Activated T-helper 1 cell treated with anti-CD3 and anti-CD28 coated beads, Interleukin-12 subunit alpha, Interleukin-12 subunit beta, Interleukin-2, Interleukin-4 antibody, amounts not matched to agents 30 ng/mL and 10 ng/mL and 1 ng/mL, durations not matched to agents 14 hours and 24 hours and 36 hours (primary cell): ENCODE measurements at regions of chr1 and their contacts with region 1.

Region 1: DNA sequence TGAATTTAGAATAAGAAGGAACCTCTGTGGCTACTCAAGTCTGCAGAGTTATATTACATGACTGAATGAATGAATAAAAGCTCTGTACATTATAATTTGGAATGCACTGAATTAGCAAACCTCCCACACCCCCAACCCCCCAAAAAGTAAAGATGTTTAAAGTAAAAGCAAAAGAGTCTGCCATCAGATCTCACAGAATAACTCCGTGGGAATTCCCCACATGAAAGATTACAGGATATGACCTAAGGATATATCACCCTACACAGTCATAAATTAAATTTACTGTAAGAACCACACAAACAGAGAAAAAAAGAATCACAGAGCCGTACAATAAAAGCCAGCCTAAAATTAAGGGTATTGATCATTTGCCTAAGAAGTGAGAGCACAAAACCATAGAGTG is 587.3 kb downstream of the PTPRC start:
- DNase-seq: peak; percentile 26
- H3K4me3 Mint-ChIP-seq: peak overlapping the region; percentile 37
- H3K27ac Mint-ChIP-seq: peak overlapping the region; percentile 51
- H3K4me1 Mint-ChIP-seq: peaks cover 21% of the 10 kb centered on the region
- H3K27me3 Mint-ChIP-seq: peaks cover 6% of the 10 kb centered on the region

Region 2: GRCh38 chr1:198167436-198167934 is 1058.7 kb before region 1 on chr1:
- intact Hi-C with region 1: loop called (anchors 10 kb)
- DNase-seq: peak; percentile 20
- H3K4me3 Mint-ChIP-seq: peak overlapping the region; percentile 56
- H3K27ac Mint-ChIP-seq: peak overlapping the region; percentile 91
- H3K4me1 Mint-ChIP-seq: peaks cover 78% of the 10 kb centered on the region
- H3K27me3 Mint-ChIP-seq: no peaks in the 10 kb centered on the region

Region 3: GRCh38 chr1:198922638-198923430 is 303.3 kb before region 1 on chr1:
- intact Hi-C with region 1: loop called (anchors 1 kb)
- DNase-seq: no peak
- H3K4me3 Mint-ChIP-seq: peak overlapping the region; percentile 78
- H3K27ac Mint-ChIP-seq: peak overlapping the region; percentile 90
- H3K4me1 Mint-ChIP-seq: peaks cover 90% of the 10 kb centered on the region
- H3K27me3 Mint-ChIP-seq: no peaks in the 10 kb centered on the region

Region 4: GRCh38 chr1:199113265-199113869 is 112.8 kb before region 1 on chr1:
- intact Hi-C with region 1: loop called (anchors 5 kb)
- DNase-seq: peak; percentile 58
- H3K4me3 Mint-ChIP-seq: no peak overlapping the region
- H3K27ac Mint-ChIP-seq: no peak overlapping the region
- H3K4me1 Mint-ChIP-seq: peaks cover 31% of the 10 kb centered on the region
- H3K27me3 Mint-ChIP-seq: no peaks in the 10 kb centered on the region

Region 5: GRCh38 chr1:199243423-199244061 is 17.4 kb after region 1 on chr1:
- intact Hi-C with region 1: loop called (anchors 2 kb)
- DNase-seq: peak; percentile 70
- H3K4me3 Mint-ChIP-seq: no peak overlapping the region
- H3K27ac Mint-ChIP-seq: no peak overlapping the region
- H3K4me1 Mint-ChIP-seq: peaks cover 18% of the 10 kb centered on the region
- H3K27me3 Mint-ChIP-seq: peaks cover 19% of the 10 kb centered on the region

Region 6: GRCh38 chr1:199272643-199273086 is 46.5 kb after region 1 on chr1:
- intact Hi-C with region 1: no loop called
- DNase-seq: no peak
- H3K4me3 Mint-ChIP-seq: no peak overlapping the region
- H3K27ac Mint-ChIP-seq: no peak overlapping the region
- H3K4me1 Mint-ChIP-seq: no peaks in the 10 kb centered on the region
- H3K27me3 Mint-ChIP-seq: peaks cover 2% of the 10 kb centered on the region